ENCODE measurements at regions of chr17 and their contacts with region 1.

Region 1: GRCh38 chr17:46940621-46941404 is 17.9 kb downstream of the GOSR2 start:
- DNase-seq: peak; percentile 81
- H3K4me3 Mint-ChIP-seq: no peak overlapping the region
- H3K27ac Mint-ChIP-seq: peak overlapping the region; percentile 51
- H3K4me1 Mint-ChIP-seq: peaks cover 14% of the 10 kb centered on the region
- H3K27me3 Mint-ChIP-seq: no peaks in the 10 kb centered on the region

Region 2: DNA sequence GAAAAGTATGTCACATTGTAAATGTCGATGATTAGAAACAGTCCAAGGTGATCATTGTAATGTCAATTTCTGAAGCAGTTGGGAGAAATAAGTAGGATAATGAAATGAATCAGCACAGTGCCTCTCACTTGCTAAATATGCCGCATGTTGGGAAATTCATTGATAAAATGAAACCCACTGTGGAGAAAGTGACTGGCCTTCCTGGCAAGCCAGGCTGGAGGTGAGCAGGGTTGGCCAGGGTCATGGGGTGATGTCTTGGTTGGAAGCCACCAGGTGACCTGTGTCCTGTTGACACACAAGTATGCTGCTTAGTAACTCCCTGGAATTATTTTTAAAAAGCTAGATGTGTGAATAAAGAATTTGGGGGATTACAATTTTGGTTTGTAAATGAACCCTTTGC is 104.3 kb before region 1 on chr17:
- CTCF ChIA-PET with region 1: interaction called, 21 read pairs
- POLR2A ChIA-PET with region 1: no interaction called
- intact Hi-C with region 1: loop called (anchors 2 kb)
- DNase-seq: no peak
- H3K4me3 Mint-ChIP-seq: no peak overlapping the region
- H3K27ac Mint-ChIP-seq: no peak overlapping the region
- H3K4me1 Mint-ChIP-seq: peaks cover 10% of the 10 kb centered on the region
- H3K27me3 Mint-ChIP-seq: peaks cover 26% of the 10 kb centered on the region

Region 3: GRCh38 chr17:46930051-46930450 is 10.8 kb before region 1 on chr17:
- CTCF ChIA-PET with region 1: interaction called, 11 read pairs
- POLR2A ChIA-PET with region 1: no interaction called
- intact Hi-C with region 1: no loop called
- DNase-seq: no peak
- H3K4me3 Mint-ChIP-seq: no peak overlapping the region
- H3K27ac Mint-ChIP-seq: no peak overlapping the region
- H3K4me1 Mint-ChIP-seq: peaks cover 42% of the 10 kb centered on the region
- H3K27me3 Mint-ChIP-seq: no peaks in the 10 kb centered on the region

Region 4: DNA sequence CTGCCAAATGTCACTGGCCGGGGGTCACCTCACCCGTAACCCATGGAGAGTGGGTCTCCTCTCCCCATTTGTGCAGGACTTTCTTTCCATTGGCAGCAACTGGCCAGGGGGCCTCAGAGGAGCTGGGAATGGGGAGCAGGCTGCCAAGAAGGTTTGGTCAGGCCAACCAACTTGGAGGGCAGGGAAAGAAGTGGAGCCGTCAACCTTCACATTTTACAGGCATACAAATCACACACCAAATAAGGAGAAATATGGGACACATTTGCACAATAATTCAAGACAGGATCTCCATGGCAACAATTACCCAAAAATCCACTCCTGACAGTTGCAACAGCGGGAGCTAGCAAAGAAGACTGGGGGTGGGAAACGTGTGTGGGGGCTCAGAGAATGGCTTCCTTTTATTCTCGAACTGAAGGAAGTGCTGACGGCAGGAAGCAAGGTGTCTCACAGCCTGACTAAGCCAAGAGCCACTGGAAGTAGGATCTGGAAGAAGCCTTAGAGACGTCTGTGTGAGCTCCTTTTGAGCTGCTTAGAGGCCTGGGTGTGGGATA is 17.3 kb after region 1 on chr17:
- CTCF ChIA-PET with region 1: interaction called, 15 read pairs
- POLR2A ChIA-PET with region 1: interaction called, 3 read pairs
- intact Hi-C with region 1: no loop called
- DNase-seq: no peak
- H3K4me3 Mint-ChIP-seq: no peak overlapping the region
- H3K27ac Mint-ChIP-seq: no peak overlapping the region
- H3K4me1 Mint-ChIP-seq: peaks cover 5% of the 10 kb centered on the region
- H3K27me3 Mint-ChIP-seq: no peaks in the 10 kb centered on the region

Region 5: GRCh38 chr17:47315451-47316266 is 374.8 kb after region 1 on chr17:
- CTCF ChIA-PET with region 1: no interaction called
- POLR2A ChIA-PET with region 1: no interaction called
- intact Hi-C with region 1: loop called (anchors 2 kb)
- DNase-seq: peak; percentile 40
- H3K4me3 Mint-ChIP-seq: no peak overlapping the region
- H3K27ac Mint-ChIP-seq: no peak overlapping the region
- H3K4me1 Mint-ChIP-seq: no peaks in the 10 kb centered on the region
- H3K27me3 Mint-ChIP-seq: no peaks in the 10 kb centered on the region